Sigmoid colon (tissue), 7 donors: ENCODE measurements at regions of chr5 and their contacts with region 1.

Region 1: GRCh38 chr5:111550279-111551020 is 38.1 kb upstream of the STARD4 start:
- DNase-seq: peak; percentile 93
- H3K4me3 ChIP-seq: no peak overlapping the region
- H3K27ac ChIP-seq: peak overlapping the region in 3 of 4 donors; percentile 48 to 66 (median 54)
- H3K4me1 ChIP-seq: peaks cover 0 to 20% (median 6%) of the 10 kb centered on the region in 4 donors
- H3K27me3 ChIP-seq: no peaks in the 10 kb centered on the region
- CTCF ChIP-seq: peak; percentile 43 to 70 (median 53)
- EP300 ChIP-seq: no peak
- POLR2A ChIP-seq: no peak

Region 2: GRCh38 chr5:111028865-111029264 is 521.6 kb before region 1 on chr5:
- intact Hi-C with region 1: no loop called
- DNase-seq: no peak
- H3K4me3 ChIP-seq: no peak overlapping the region
- H3K27ac ChIP-seq: no peak overlapping the region
- H3K4me1 ChIP-seq: no peaks in the 10 kb centered on the region
- H3K27me3 ChIP-seq: no peaks in the 10 kb centered on the region
- CTCF ChIP-seq: no peak
- EP300 ChIP-seq: no peak
- POLR2A ChIP-seq: no peak

Region 3: DNA sequence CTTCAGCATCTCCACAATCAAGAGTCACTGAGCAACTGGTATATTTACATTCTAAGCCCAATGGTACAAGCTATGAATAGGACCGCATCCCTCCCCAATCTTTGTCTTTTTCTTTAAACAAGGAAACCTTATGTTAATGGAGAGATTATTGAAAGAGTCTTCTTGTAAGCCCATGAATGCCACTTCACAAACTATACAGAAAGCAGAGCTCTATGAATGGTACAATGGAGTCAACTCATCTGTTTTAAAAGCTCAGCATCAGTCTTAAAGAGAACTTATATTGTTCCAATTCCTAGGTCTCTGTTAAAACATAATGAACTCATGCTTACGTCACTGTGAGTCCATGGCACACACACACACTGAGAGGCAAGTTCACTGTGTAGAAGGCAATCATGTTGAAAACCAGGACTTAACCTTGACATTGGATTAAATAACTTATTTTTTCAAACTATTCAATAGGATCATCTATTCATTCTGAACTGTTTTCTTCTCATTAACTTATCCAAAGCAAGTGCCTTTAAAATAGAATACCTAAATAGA is 202.0 kb after region 1 on chr5:
- intact Hi-C with region 1: loop called (anchors 5 kb)
- DNase-seq: no peak
- H3K4me3 ChIP-seq: no peak overlapping the region
- H3K27ac ChIP-seq: no peak overlapping the region
- H3K4me1 ChIP-seq: peaks cover 0 to 61% (median 42%) of the 10 kb centered on the region in 4 donors
- H3K27me3 ChIP-seq: no peaks in the 10 kb centered on the region
- CTCF ChIP-seq: no peak
- EP300 ChIP-seq: no peak
- POLR2A ChIP-seq: no peak